Activated CD4-positive, alpha-beta T cell treated with anti-CD3 and anti-CD28 coated beads, Interleukin-2, amount 10 ng/mL, durations not matched to agents 7 days and 5 days (primary cell): ENCODE measurements at regions of chr9 and their contacts with region 1.

Region 1: GRCh38 chr9:112097712-112098688 is 77.1 kb downstream of the SUSD1 start:
- DNase-seq: peak; percentile 85
- H3K4me3 Mint-ChIP-seq: no peak overlapping the region
- H3K27ac Mint-ChIP-seq: no peak overlapping the region
- H3K4me1 Mint-ChIP-seq: peaks cover 31% of the 10 kb centered on the region
- H3K27me3 Mint-ChIP-seq: no peaks in the 10 kb centered on the region

Region 2: DNA sequence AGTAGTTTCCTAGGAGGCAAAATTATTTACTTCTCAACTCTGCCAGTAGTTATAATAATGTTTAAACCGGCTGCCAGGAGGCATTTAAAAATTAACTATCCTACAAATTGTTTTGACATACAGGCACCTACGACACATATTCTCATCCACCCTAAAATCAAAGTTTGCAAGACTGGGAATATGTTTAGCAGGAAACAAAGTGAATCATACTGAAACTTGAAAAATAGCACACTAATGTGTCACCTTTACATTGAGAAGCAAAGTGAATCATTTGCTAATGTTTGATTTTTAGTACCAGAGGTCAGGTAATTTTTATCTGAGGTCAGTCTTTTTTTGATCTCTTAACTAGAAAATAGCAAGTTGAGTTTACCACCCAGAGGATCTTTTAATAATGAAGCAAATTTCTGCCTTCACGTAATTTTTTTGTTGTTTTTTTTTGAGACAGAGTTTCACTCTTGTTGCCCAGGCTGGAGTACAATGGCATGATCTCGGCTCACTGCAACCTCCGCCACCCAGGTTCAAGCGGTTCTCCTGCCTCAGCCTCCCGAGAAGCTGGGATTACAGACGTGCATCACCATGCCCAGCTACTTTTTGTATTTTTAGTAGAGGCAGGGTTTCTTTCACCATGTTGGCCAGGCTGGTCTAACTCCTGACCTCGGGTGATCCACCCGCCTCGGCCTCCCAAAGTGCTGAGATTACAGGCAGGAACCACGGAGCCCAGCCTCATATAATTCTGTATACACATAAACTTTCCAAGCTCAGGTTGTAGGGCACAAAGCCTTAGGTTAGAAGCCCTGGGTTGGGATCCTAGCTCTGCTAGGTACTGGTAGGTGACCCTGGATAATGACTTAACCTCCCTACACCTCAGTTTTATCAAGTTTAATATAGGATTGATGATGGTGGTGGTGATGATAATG is 77.1 kb before region 1 on chr9:
- CTCF ChIA-PET with region 1: no interaction called
- POLR2A ChIA-PET with region 1: no interaction called
- DNase-seq: no peak
- H3K4me3 Mint-ChIP-seq: no peak overlapping the region
- H3K27ac Mint-ChIP-seq: no peak overlapping the region
- H3K4me1 Mint-ChIP-seq: peaks cover 16% of the 10 kb centered on the region
- H3K27me3 Mint-ChIP-seq: peaks cover 13% of the 10 kb centered on the region

Region 3: GRCh38 chr9:112112941-112113681 is 15.1 kb after region 1 on chr9:
- CTCF ChIA-PET with region 1: interaction called, 10 read pairs
- POLR2A ChIA-PET with region 1: no interaction called
- DNase-seq: peak; percentile 31
- H3K4me3 Mint-ChIP-seq: no peak overlapping the region
- H3K27ac Mint-ChIP-seq: no peak overlapping the region
- H3K4me1 Mint-ChIP-seq: no peaks in the 10 kb centered on the region
- H3K27me3 Mint-ChIP-seq: no peaks in the 10 kb centered on the region

Region 4: DNA sequence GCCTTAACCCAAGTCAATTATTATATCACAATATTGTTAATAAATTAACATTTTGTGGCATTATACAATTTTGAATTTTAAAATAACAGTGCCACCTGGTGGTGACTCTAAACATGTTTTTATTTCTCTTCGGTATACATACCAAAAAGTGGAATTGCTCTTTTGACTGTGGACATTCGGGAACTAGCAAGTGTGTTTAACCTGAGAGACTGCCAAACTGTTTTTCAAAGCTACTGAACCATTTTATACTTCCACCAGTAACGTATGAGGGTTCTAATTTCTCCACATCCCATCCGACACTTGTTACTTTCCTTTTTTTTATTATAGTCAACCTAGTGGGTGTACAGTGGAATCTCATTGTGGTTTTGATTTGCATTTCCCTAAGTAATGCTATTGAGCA is 263.6 kb after region 1 on chr9:
- CTCF ChIA-PET with region 1: interaction called, 10 read pairs
- POLR2A ChIA-PET with region 1: no interaction called
- DNase-seq: peak; percentile 45
- H3K4me3 Mint-ChIP-seq: no peak overlapping the region
- H3K27ac Mint-ChIP-seq: no peak overlapping the region
- H3K4me1 Mint-ChIP-seq: peaks cover 11% of the 10 kb centered on the region
- H3K27me3 Mint-ChIP-seq: peaks cover 14% of the 10 kb centered on the region